ENCODE measurements at regions of chr5 and their contacts with region 1.

Region 1: GRCh38 chr5:98923966-98924365 is 4.8 kb downstream of the CHD1 start:
- DNase-seq: no peak
- H3K4me3 ChIP-seq: no peak overlapping the region
- H3K27ac ChIP-seq: peak overlapping the region in 1 of 2 experiments; percentile 32
- H3K4me1 ChIP-seq: peaks cover 0 to 19% (median 12%) of the 10 kb centered on the region in 4 experiments
- H3K27me3 ChIP-seq: no peaks in the 10 kb centered on the region

Region 2: GRCh38 chr5:98804066-98804465 is 119.9 kb before region 1 on chr5:
- CTCF ChIA-PET with region 1: no interaction called
- POLR2A ChIA-PET with region 1: no interaction called
- DNase-seq: no peak
- H3K4me3 ChIP-seq: no peak overlapping the region
- H3K27ac ChIP-seq: no peak overlapping the region
- H3K4me1 ChIP-seq: no peaks in the 10 kb centered on the region
- H3K27me3 ChIP-seq: no peaks in the 10 kb centered on the region

Region 3: DNA sequence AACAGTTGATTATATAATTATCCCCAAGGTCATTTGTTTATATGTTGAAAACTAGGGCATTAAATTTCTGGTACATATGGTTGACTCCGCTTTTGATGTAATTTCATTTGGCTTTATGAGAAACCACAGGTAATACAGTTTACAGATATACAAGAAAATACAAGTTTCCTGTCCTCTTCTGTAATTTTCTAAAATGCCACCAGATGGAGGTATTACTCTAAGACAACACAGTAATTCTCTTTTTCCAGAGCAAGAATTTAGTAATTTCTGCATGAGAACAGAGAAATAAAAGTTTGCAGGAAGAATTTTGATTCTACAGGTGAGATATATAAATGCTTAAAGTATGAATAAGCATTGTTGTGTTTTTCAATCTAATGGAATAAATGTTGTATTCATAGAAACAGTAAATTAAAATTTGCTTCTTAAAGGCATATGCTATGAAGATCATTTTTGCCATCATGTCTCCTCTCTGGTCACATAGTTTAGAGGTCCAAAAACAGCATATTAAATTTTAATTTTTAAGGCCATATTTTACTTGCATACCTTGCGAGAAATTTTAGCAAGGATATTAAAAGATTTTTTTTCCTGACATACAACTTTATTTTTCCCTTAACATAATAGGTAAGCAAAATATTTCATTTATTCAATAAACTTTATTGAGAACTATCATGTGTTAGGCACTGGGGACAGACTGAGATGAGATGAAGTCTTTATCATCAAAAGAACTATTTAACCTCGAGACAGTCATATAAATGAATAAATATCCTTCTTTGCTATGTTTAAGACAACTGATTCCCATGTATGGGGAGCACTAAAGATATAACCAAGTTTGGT is 17.9 kb before region 1 on chr5:
- CTCF ChIA-PET with region 1: interaction called, 11 read pairs
- POLR2A ChIA-PET with region 1: no interaction called
- DNase-seq: peak; percentile 61 to 81 (median 77)
- H3K4me3 ChIP-seq: no peak overlapping the region
- H3K27ac ChIP-seq: no peak overlapping the region
- H3K4me1 ChIP-seq: no peaks in the 10 kb centered on the region
- H3K27me3 ChIP-seq: no peaks in the 10 kb centered on the region

Region 4: DNA sequence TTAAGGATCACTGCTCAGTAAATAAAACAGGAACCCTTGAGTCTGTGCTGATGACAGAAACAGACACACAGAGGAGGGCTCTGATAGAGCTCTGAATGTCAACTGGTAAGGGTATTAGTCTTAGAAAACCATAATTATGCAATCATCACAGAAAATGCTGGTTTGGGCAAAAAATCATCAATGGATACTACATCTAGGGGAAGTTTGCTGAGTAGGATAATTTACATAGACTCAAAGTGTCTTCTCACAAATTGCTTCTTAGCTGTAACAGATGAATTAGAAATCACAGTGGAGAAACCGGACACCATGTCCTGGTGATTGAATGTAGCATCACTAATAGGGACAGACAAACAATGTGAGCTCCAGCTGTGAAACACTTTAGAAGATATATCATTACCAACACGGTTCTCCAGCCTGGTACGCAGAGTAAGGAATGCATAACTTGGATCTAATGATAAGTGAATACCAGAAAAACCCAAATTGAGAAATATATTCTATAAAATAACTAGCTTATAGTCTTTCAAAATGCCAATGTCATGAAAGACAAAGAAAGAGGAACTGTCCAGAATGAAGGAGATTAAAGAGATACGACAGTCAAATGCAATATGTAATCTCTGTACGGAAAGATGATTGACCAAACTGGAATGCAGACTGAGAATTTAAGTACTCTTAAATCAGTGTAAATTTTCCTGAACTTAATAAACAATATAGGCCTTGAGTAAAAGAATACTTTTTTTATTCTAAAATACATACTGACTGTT is 12.5 kb before region 1 on chr5:
- CTCF ChIA-PET with region 1: interaction called, 10 read pairs
- POLR2A ChIA-PET with region 1: interaction called, 4 read pairs
- DNase-seq: peak in 2 of 3 donors; percentile 35 to 50
- H3K4me3 ChIP-seq: no peak overlapping the region
- H3K27ac ChIP-seq: no peak overlapping the region
- H3K4me1 ChIP-seq: no peaks in the 10 kb centered on the region
- H3K27me3 ChIP-seq: no peaks in the 10 kb centered on the region

Region 5: DNA sequence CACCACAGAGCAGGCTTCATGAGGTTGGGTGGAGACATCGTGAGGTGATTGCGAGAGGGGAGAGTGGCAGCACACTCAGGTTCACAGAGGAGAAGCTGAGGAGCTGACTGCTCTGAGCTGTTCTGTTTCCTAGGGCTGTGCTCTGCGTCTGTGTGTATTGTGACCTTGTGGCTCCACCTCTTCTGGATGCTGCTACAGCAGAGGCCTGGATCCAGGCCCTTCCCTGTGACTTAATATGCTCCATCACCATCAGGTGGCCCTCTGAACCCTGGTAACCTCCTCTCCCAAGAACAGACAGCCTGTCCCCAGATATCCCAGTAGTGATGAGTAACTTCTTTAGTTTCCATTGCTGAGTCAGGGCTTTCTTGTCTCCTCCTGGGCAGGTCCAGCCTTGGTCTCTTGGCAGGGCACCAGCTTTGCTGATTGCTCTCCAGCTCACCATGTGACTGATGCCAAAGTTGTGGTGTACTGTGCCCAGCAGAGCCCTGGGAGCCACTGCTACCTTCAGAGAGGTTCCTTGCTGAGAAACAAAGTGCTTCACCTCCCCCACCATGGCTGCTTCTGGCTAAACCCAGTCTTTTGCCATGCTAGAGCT is 217.7 kb after region 1 on chr5:
- CTCF ChIA-PET with region 1: no interaction called
- POLR2A ChIA-PET with region 1: no interaction called
- DNase-seq: no peak
- H3K4me3 ChIP-seq: no peak overlapping the region
- H3K27ac ChIP-seq: no peak overlapping the region
- H3K4me1 ChIP-seq: no peaks in the 10 kb centered on the region
- H3K27me3 ChIP-seq: no peaks in the 10 kb centered on the region

Measured in common myeloid progenitor, CD34-positive (primary cell).